ENCODE measurements at regions of chr17 and their contacts with region 1.

Region 1: DNA sequence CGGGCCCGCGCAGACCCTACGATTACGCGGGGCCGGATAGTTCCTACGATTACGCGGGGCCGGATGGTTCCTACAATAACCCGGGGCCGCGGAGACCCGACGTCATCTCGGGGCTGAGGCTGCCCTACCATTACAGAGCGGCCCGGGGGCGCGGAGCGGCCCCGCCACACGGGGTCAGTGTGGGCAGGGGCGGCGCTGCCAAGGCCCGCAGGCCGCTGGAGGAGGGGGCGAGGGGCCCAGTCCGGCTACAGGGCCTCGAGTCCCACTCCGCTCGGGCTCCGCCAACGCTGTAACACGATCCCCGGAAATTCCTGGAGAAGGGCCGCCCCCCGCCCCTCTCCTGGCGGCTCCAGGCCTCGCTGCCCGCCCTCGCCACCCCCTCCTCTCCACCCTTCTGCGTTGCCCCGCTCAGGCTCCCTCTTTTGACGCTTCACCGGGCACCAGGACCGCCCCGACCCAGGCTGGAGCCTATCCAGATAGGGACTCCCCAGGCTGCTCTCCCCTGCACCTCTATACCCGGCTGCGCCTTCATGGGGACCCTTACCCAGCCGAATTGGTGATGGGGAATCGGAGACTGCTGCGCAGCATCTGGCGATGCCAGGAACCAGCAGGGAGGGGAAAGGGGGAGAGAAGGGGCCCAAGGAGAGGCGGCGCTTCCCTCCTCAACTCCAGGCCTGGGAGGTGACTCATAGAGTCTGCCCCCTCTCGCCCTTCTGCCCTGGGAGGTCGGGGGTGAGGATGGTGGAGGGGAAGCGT is at the start of gene RAB34:
- DNase-seq: no peak
- ATAC-seq: no peak
- H3K4me3 ChIP-seq: no peak within 1 kb of the TSS
- H3K27ac ChIP-seq: no peak within 1 kb of the TSS
- H3K4me1 ChIP-seq: peaks cover 25 to 35% of the 10 kb centered on the region in 2 experiments
- H3K27me3 ChIP-seq: 0 out of 5 replicates have a peak, but pooled peaks cover 0 to 11% of the 10 kb centered on the region in 2 experiments
- CTCF ChIP-seq: no peak
- EP300 ChIP-seq: no peak
- POLR2A ChIP-seq: no peak
- RAD21 ChIP-seq: no peak
- polyA plus RNA-seq, gene RAB34: 0.07 TPM in 1 of 2 experiments, not detected in the other

Region 2: GRCh38 chr17:28701987-28702751 is 15.6 kb before region 1 on chr17:
- CTCF ChIA-PET with region 1: no interaction called
- POLR2A ChIA-PET with region 1: interaction called, 133 read pairs
- in situ Hi-C with region 1: no loop called
- intact Hi-C with region 1: no loop called
- DNase-seq: no peak
- ATAC-seq: no peak
- H3K4me3 ChIP-seq: no peak overlapping the region
- H3K27ac ChIP-seq: no peak overlapping the region
- H3K4me1 ChIP-seq: peaks cover 2 to 7% of the 10 kb centered on the region in 2 experiments; a peak in 3 of 5 replicates
- H3K27me3 ChIP-seq: no peaks in the 10 kb centered on the region
- CTCF ChIP-seq: no peak
- EP300 ChIP-seq: no peak
- POLR2A ChIP-seq: no peak; the same call in 1 of the 2 replicates
- RAD21 ChIP-seq: no peak

Region 3: GRCh38 chr17:28750178-28751047 is 32.7 kb after region 1 on chr17:
- CTCF ChIA-PET with region 1: interaction called, 10 read pairs
- POLR2A ChIA-PET with region 1: interaction called, 367 read pairs
- in situ Hi-C with region 1: no loop called
- intact Hi-C with region 1: no loop called
- DNase-seq: peak; percentile 80 to 98 (median 87)
- ATAC-seq: peak; percentile 87
- H3K4me3 ChIP-seq: no peak overlapping the region
- H3K27ac ChIP-seq: peak overlapping the region; percentile 37; the same call in 2 of the 3 replicates
- H3K4me1 ChIP-seq: peaks cover 20 to 36% of the 10 kb centered on the region in 2 experiments
- H3K27me3 ChIP-seq: no peaks in the 10 kb centered on the region
- CTCF ChIP-seq: peak; percentile 100
- EP300 ChIP-seq: no peak
- POLR2A ChIP-seq: peak; percentile 48; the same call in 1 of the 2 replicates
- RAD21 ChIP-seq: peak; percentile 99

Region 4: DNA sequence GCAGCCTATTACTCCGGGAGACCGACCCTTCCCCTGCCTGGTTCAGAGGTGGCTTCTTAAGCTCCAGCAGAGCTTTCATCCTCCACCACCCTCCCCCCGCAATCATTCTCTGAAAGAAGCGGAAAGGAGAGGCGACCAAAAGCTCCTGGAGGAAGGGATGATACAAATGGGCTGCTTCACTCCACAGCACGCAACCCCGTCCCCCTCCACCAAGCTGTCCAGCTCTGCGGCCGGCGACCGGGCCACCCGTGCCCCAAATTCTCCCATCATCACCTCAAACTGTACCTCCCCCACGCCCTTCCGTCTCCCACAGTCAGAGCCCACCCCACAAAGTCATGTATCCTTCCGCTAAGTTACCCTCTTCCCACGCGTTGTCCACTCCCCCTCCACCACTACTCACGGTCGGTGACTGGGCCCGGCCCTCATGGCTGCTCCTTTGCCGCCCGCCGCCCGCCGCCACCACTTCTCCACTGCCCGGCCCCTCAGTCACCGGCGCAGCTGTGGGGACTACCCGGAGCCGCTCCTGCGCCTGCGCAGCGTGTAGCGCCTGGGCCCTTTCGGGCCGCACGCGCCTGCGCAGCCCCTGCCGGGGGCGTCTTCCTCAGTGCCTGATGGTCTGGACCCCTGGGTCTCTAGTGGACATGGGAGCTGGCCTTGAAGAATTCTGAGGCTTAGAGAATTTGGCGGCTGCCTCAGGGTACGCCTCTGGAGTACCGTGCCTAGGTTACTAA is 124.7 kb after region 1 on chr17 and contains the start of gene FAM222B:
- CTCF ChIA-PET with region 1: no interaction called
- POLR2A ChIA-PET with region 1: interaction called, 10 read pairs
- in situ Hi-C with region 1: no loop called
- intact Hi-C with region 1: no loop called
- DNase-seq: peak; percentile 95 to 100 (median 99)
- ATAC-seq: peak; percentile 97
- H3K4me3 ChIP-seq: peak within 1 kb of the TSS; percentile 71
- H3K27ac ChIP-seq: peak within 1 kb of the TSS; percentile 76
- H3K4me1 ChIP-seq: peaks cover 17 to 33% of the 10 kb centered on the region in 2 experiments
- H3K27me3 ChIP-seq: no peaks in the 10 kb centered on the region
- CTCF ChIP-seq: no peak
- EP300 ChIP-seq: no peak
- POLR2A ChIP-seq: peak; percentile 95
- RAD21 ChIP-seq: no peak; a peak in 1 of 4 replicates
- polyA plus RNA-seq, gene FAM222B: 4.0 to 6.7 TPM

Region 5: GRCh38 chr17:28896884-28897768 is 179.4 kb after region 1 on chr17 and contains the start of gene FLOT2:
- CTCF ChIA-PET with region 1: no interaction called
- POLR2A ChIA-PET with region 1: interaction called, 11 read pairs
- in situ Hi-C with region 1: no loop called
- intact Hi-C with region 1: no loop called
- DNase-seq: peak; percentile 84 to 88 (median 86)
- ATAC-seq: peak; percentile 88
- H3K4me3 ChIP-seq: peak within 1 kb of the TSS; percentile 95
- H3K27ac ChIP-seq: peak within 1 kb of the TSS; percentile 91
- H3K4me1 ChIP-seq: peaks cover 38 to 48% of the 10 kb centered on the region in 2 experiments
- H3K27me3 ChIP-seq: no peaks in the 10 kb centered on the region
- CTCF ChIP-seq: peak in 2 of 3 experiments; percentile 32 to 66; a peak in 5 of 6 replicates
- EP300 ChIP-seq: no peak
- POLR2A ChIP-seq: peak; percentile 85
- RAD21 ChIP-seq: peak; percentile 5 to 31
- polyA plus RNA-seq, gene FLOT2: 17.5 to 30.1 TPM

Measured in K562 (cell line).